CD8-positive, alpha-beta T cell (primary cell): ENCODE measurements at regions of chr9 and their contacts with region 1.

Region 1: GRCh38 chr9:128275996-128276573 is at the starts of genes GOLGA2 and SWI5:
- DNase-seq: peak; percentile 99 to 100 (median 100)
- ATAC-seq: peak; percentile 93
- H3K4me3 ChIP-seq: peak within 1 kb of the TSS; percentile 75 to 81
- H3K4me3 Mint-ChIP-seq: peak within 1 kb of the TSS; percentile 96
- H3K27ac ChIP-seq: peak within 1 kb of the TSS; percentile 76 to 81
- H3K27ac Mint-ChIP-seq: peak within 1 kb of the TSS; percentile 96
- H3K4me1 ChIP-seq: peaks cover 22% of the 10 kb centered on the region
- H3K4me1 Mint-ChIP-seq: peaks cover 32% of the 10 kb centered on the region
- H3K27me3 ChIP-seq: no peaks in the 10 kb centered on the region
- H3K27me3 Mint-ChIP-seq: no peaks in the 10 kb centered on the region
- CTCF ChIP-seq: no peak
- total RNA-seq, gene GOLGA2: 49.9 to 59.0 TPM
- total RNA-seq, gene SWI5: 3.5 to 4.3 TPM

Region 2: GRCh38 chr9:128127990-128128835 is 147.9 kb before region 1 on chr9:
- CTCF ChIA-PET with region 1: no interaction called
- POLR2A ChIA-PET with region 1: no interaction called
- intact Hi-C with region 1: loop called in 1 of 2 experiments (anchors 5 kb)
- DNase-seq: peak; percentile 69 to 95 (median 83)
- ATAC-seq: peak; percentile 81
- H3K4me3 ChIP-seq: peak overlapping the region; percentile 99 to 100
- H3K4me3 Mint-ChIP-seq: peak overlapping the region; percentile 99
- H3K27ac ChIP-seq: peak overlapping the region; percentile 99
- H3K27ac Mint-ChIP-seq: peak overlapping the region; percentile 99
- H3K4me1 ChIP-seq: peaks cover 31% of the 10 kb centered on the region
- H3K4me1 Mint-ChIP-seq: peaks cover 38% of the 10 kb centered on the region
- H3K27me3 ChIP-seq: no peaks in the 10 kb centered on the region
- H3K27me3 Mint-ChIP-seq: peaks cover 2% of the 10 kb centered on the region
- CTCF ChIP-seq: no peak

Region 3: DNA sequence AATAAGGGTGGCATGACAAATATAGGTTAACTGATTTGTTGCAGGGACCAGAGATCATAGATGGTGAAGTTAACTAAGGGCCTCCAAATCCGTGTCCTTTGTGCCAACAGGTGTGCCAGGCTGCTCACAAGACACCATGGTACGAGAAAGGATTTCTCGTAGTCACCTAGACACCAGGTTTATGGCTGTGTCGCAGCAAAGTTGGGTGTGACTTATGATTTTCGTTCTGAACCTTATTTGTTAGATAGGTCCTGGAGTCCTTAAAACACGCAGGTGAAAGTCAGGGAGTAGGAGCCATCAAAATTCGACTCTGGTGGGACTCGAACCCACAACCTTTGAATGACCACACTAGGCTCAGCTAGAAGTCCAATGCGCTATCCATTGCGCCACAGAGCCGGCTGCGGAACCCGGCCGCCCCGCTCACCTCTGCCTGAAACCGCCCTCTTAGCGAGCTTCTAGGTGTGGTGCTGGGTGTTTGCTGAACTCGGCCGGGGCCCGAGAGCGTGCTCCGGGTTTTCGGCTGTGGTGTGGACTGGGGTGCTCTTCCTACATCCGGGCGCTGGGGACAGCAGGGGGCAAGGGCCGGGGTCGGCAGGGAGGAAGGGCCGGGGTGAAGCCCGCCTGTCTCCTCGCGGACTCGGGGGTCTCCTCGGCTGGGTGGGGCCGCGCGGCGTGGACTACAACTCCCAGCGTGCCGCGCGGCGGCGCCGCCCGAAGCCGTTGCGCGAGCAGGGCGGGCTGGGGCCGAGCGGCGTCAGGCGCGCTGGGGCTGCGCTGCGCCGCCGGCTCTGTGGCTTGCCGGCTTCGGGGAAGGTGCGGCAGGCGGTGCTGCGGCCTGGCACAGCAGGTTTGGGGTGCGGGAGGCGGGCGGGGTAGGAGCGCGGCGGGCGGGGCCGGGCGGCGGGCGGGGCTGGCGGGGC is 63.9 kb after region 1 on chr9 and contains the start of gene SLC27A4:
- CTCF ChIA-PET with region 1: interaction called, 3 read pairs
- POLR2A ChIA-PET with region 1: interaction called, 5 read pairs
- intact Hi-C with region 1: loop called (anchors 1 kb)
- DNase-seq: peak; percentile 52 to 92 (median 76)
- ATAC-seq: peak; percentile 92
- H3K4me3 ChIP-seq: peak within 1 kb of the TSS; percentile 73 to 83
- H3K4me3 Mint-ChIP-seq: peak within 1 kb of the TSS; percentile 96
- H3K27ac ChIP-seq: peak within 1 kb of the TSS; percentile 40 to 53
- H3K27ac Mint-ChIP-seq: peak within 1 kb of the TSS; percentile 85
- H3K4me1 ChIP-seq: peaks cover 14% of the 10 kb centered on the region
- H3K4me1 Mint-ChIP-seq: peaks cover 8% of the 10 kb centered on the region
- H3K27me3 ChIP-seq: no peaks in the 10 kb centered on the region
- H3K27me3 Mint-ChIP-seq: no peaks in the 10 kb centered on the region
- CTCF ChIP-seq: no peak
- total RNA-seq, gene SLC27A4: 2.2 to 2.4 TPM

Region 4: GRCh38 chr9:128370826-128371621 is 94.9 kb after region 1 on chr9 and contains the start of gene URM1:
- CTCF ChIA-PET with region 1: no interaction called
- POLR2A ChIA-PET with region 1: interaction called, 8 read pairs
- intact Hi-C with region 1: loop called (anchors 1 kb)
- DNase-seq: peak; percentile 91 to 98 (median 96)
- ATAC-seq: peak; percentile 90
- H3K4me3 ChIP-seq: peak within 1 kb of the TSS; percentile 84 to 95
- H3K4me3 Mint-ChIP-seq: peak within 1 kb of the TSS; percentile 97
- H3K27ac ChIP-seq: peak within 1 kb of the TSS; percentile 76 to 96
- H3K27ac Mint-ChIP-seq: peak within 1 kb of the TSS; percentile 98
- H3K4me1 ChIP-seq: peaks cover 16% of the 10 kb centered on the region
- H3K4me1 Mint-ChIP-seq: peaks cover 43% of the 10 kb centered on the region
- H3K27me3 ChIP-seq: no peaks in the 10 kb centered on the region
- H3K27me3 Mint-ChIP-seq: no peaks in the 10 kb centered on the region
- CTCF ChIP-seq: no peak
- total RNA-seq, gene URM1: 30.4 to 31.5 TPM

Region 5: DNA sequence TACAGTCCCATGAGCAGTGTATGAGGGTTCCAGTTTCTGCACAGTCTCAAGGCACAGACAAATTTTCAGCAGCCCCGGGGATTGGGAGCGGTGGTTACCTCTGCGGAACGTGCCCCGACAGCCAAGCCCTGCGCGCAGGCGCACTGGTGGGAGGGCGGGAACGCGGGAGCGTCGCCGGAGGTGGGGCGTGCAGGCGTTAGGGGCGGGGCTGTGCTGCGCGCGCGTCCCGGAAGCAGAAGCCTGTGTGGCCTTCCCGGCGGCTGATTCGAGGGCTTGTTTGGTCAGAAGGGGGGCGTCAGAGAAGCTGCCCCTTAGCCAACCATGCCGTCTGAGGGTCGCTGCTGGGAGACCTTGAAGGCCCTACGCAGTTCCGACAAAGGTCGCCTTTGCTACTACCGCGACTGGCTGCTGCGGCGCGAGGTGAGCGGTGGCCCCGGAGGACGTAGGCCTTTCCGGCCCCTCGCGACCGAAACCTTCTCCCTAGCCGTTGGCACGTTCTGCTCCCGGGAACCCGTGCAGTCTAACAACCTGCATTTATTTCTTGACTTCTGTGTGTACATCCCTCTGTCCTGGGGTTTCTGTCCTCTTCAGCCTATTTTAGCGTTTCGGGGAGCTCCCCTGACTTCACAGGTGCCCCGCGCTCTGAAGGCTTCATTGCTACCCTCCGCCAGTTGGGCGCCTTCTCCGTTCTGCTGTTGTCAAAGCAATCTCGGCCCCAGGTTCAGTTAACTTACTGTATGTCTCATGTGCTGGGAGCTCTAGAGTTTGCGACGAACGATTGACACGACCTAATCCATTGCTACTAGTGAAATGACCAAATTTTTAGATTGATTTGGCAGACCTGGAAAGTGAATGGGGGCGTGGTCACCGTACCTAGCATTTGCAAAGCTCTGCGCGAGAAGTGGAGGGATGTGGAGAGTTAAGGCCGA is 228.7 kb after region 1 on chr9 and contains the start of gene GLE1:
- CTCF ChIA-PET with region 1: no interaction called
- POLR2A ChIA-PET with region 1: no interaction called
- intact Hi-C with region 1: loop called in 1 of 2 experiments (anchors 1 kb)
- DNase-seq: peak; percentile 93 to 99 (median 97)
- ATAC-seq: peak; percentile 95
- H3K4me3 ChIP-seq: peak within 1 kb of the TSS; percentile 80 to 96
- H3K4me3 Mint-ChIP-seq: peak within 1 kb of the TSS; percentile 99
- H3K27ac ChIP-seq: peak within 1 kb of the TSS; percentile 84 to 90
- H3K27ac Mint-ChIP-seq: peak within 1 kb of the TSS; percentile 99
- H3K4me1 ChIP-seq: peaks cover 18% of the 10 kb centered on the region
- H3K4me1 Mint-ChIP-seq: peaks cover 38% of the 10 kb centered on the region
- H3K27me3 ChIP-seq: no peaks in the 10 kb centered on the region
- H3K27me3 Mint-ChIP-seq: no peaks in the 10 kb centered on the region
- CTCF ChIP-seq: no peak
- total RNA-seq, gene GLE1: 6.6 to 8.5 TPM

Region 6: GRCh38 chr9:128688512-128689292 is 412.6 kb after region 1 on chr9 and contains the start of gene SET:
- CTCF ChIA-PET with region 1: no interaction called
- POLR2A ChIA-PET with region 1: no interaction called
- intact Hi-C with region 1: loop called in 1 of 2 experiments (anchors 10 kb)
- DNase-seq: peak; percentile 81 to 97 (median 92)
- ATAC-seq: peak; percentile 78
- H3K4me3 ChIP-seq: peak within 1 kb of the TSS; percentile 68 to 90
- H3K4me3 Mint-ChIP-seq: peak within 1 kb of the TSS; percentile 90
- H3K27ac ChIP-seq: peak within 1 kb of the TSS; percentile 68 to 91
- H3K27ac Mint-ChIP-seq: peak within 1 kb of the TSS; percentile 96
- H3K4me1 ChIP-seq: peaks cover 64% of the 10 kb centered on the region
- H3K4me1 Mint-ChIP-seq: peaks cover 67% of the 10 kb centered on the region
- H3K27me3 ChIP-seq: no peaks in the 10 kb centered on the region
- H3K27me3 Mint-ChIP-seq: no peaks in the 10 kb centered on the region
- CTCF ChIP-seq: no peak
- total RNA-seq, gene SET: 243 to 260 TPM

Region 7: GRCh38 chr9:129036241-129036922 is 760.3 kb after region 1 on chr9 and contains the start of gene MIGA2:
- CTCF ChIA-PET with region 1: no interaction called
- POLR2A ChIA-PET with region 1: no interaction called
- intact Hi-C with region 1: loop called in 1 of 2 experiments (anchors 10 kb)
- DNase-seq: peak; percentile 85 to 99 (median 94)
- ATAC-seq: peak; percentile 94
- H3K4me3 ChIP-seq: peak within 1 kb of the TSS; percentile 99
- H3K4me3 Mint-ChIP-seq: peak within 1 kb of the TSS; percentile 98
- H3K27ac ChIP-seq: peak within 1 kb of the TSS; percentile 68 to 83
- H3K27ac Mint-ChIP-seq: peak within 1 kb of the TSS; percentile 85
- H3K4me1 ChIP-seq: peaks cover 21% of the 10 kb centered on the region
- H3K4me1 Mint-ChIP-seq: peaks cover 36% of the 10 kb centered on the region
- H3K27me3 ChIP-seq: no peaks in the 10 kb centered on the region
- H3K27me3 Mint-ChIP-seq: no peaks in the 10 kb centered on the region
- CTCF ChIP-seq: no peak
- total RNA-seq, gene MIGA2: 63.5 to 69.0 TPM